ENCODE measurements at regions of chr1 and their contacts with region 1.

Region 1: GRCh38 chr1:42846257-42847110 is at the start of gene ZNF691:
- DNase-seq: peak; percentile 97
- ATAC-seq: peak; percentile 98
- H3K4me3 ChIP-seq: peak within 1 kb of the TSS; percentile 85 to 97 (median 95)
- H3K27ac ChIP-seq: peak within 1 kb of the TSS; percentile 85
- H3K4me1 ChIP-seq: peaks cover 24% of the 10 kb centered on the region
- H3K27me3 ChIP-seq: no peaks in the 10 kb centered on the region; a peak in 1 of 5 replicates
- CTCF ChIP-seq: peak; percentile 78
- EP300 ChIP-seq: no peak
- POLR2A ChIP-seq: peak; percentile 80 to 85
- RAD21 ChIP-seq: peak; percentile 33; the same call in 1 of the 2 replicates
- total RNA-seq, gene ZNF691: 7.8 and 8.2 TPM in 2 replicates

Region 2: GRCh38 chr1:42567043-42567442 is 279.4 kb before region 1 on chr1:
- CTCF ChIA-PET with region 1: no interaction called
- POLR2A ChIA-PET with region 1: no interaction called
- in situ Hi-C with region 1: no loop called
- intact Hi-C with region 1: no loop called
- DNase-seq: no peak
- ATAC-seq: no peak
- H3K4me3 ChIP-seq: no peak overlapping the region
- H3K27ac ChIP-seq: no peak overlapping the region
- H3K4me1 ChIP-seq: no peaks in the 10 kb centered on the region
- H3K27me3 ChIP-seq: no peaks in the 10 kb centered on the region
- CTCF ChIP-seq: no peak
- EP300 ChIP-seq: no peak
- POLR2A ChIP-seq: no peak
- RAD21 ChIP-seq: no peak

Region 3: DNA sequence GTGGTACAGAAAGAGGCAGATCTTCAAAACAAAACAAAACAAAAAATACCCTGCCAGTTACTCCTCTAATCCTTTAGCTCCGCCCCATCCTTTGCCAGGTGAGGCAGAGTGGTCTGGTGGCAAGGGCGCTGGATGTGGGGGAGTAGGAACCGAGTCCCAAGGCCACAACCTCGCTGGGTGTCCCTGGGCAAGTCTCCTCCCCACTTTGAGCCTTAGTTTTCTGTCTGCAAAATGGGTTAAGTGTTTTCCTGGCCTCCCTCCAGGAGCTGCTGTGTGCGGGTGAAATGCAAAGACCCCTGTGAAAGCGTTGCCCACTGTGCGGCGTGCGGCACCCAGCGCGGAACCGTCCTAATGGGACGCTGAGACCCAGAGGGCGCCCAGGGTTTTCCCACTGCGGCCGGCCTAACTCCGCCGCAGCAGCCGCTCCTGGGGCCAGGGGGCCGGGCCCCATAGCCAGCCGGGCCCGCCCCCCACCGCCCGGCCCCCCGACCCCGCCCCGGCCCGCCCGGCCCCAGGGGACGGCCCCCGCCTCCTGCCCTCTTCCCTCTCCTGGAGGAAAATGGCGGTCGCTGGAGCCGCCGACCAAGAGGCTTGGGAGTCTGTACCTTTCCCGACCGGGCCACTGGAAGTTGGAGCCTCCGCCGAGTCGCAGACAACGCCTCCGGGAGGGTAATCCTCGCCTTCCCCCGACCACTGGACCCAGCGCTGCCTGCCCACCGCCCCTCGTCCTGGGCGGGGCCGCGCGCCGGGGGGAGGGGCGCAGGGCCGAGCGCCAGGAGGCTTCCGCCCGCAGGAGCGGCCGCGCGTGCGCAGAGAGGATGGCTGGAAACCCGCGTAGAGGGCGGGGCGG is 29.7 kb before region 1 on chr1 and contains the starts of genes ERMAP and SVBP:
- CTCF ChIA-PET with region 1: no interaction called
- POLR2A ChIA-PET with region 1: interaction called, 37 read pairs
- in situ Hi-C with region 1: no loop called
- intact Hi-C with region 1: loop called (anchors 2 kb)
- DNase-seq: peak; percentile 73
- ATAC-seq: peak; percentile 94
- H3K4me3 ChIP-seq: peak within 1 kb of the TSS; percentile 73 to 87 (median 84)
- H3K27ac ChIP-seq: peak within 1 kb of the TSS; percentile 100
- H3K4me1 ChIP-seq: peaks cover 34% of the 10 kb centered on the region
- H3K27me3 ChIP-seq: no peaks in the 10 kb centered on the region; a peak in 1 of 5 replicates
- CTCF ChIP-seq: peak; percentile 43
- EP300 ChIP-seq: no peak
- POLR2A ChIP-seq: peak; percentile 74 to 86
- RAD21 ChIP-seq: peak; percentile 38; the same call in 1 of the 2 replicates
- total RNA-seq, gene ERMAP: 2.6 and 4.4 TPM in 2 replicates
- total RNA-seq, gene SVBP: 45.2 and 48.2 TPM in 2 replicates

Region 4: GRCh38 chr1:42825036-42825851 is 21.2 kb before region 1 on chr1:
- CTCF ChIA-PET with region 1: no interaction called
- POLR2A ChIA-PET with region 1: interaction called, 11 read pairs
- in situ Hi-C with region 1: no loop called
- intact Hi-C with region 1: no loop called
- DNase-seq: no peak
- ATAC-seq: no peak
- H3K4me3 ChIP-seq: no peak overlapping the region
- H3K27ac ChIP-seq: no peak overlapping the region
- H3K4me1 ChIP-seq: peaks cover 28% of the 10 kb centered on the region
- H3K27me3 ChIP-seq: no peaks in the 10 kb centered on the region
- CTCF ChIP-seq: no peak
- EP300 ChIP-seq: no peak
- POLR2A ChIP-seq: no peak
- RAD21 ChIP-seq: no peak

Region 5: DNA sequence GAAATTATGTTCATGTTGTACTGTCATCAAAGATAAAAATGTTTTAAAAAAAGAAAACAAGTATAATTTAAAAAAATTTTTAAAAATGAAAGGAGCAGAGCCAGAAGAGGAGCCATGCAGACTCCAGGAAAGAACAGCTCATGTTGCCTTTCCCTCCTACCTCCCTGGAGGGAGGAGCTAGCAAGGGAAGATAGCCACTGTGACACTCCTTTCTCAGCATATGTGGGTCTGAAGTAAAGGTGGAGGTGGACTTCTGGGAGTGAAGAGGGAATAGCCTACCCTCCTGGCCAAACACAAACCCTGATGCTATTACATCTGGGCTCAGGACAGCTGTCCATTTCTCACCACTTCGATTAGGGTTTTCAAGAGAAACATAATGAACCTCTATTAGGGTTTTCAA is 58.0 kb after region 1 on chr1:
- CTCF ChIA-PET with region 1: no interaction called
- POLR2A ChIA-PET with region 1: no interaction called
- in situ Hi-C with region 1: loop called (anchors 5 kb)
- intact Hi-C with region 1: no loop called
- DNase-seq: no peak
- ATAC-seq: no peak
- H3K4me3 ChIP-seq: no peak overlapping the region
- H3K27ac ChIP-seq: no peak overlapping the region
- H3K4me1 ChIP-seq: no peaks in the 10 kb centered on the region
- H3K27me3 ChIP-seq: peaks cover 3 to 19% of the 10 kb centered on the region in 2 experiments; a peak in 3 of 5 replicates
- CTCF ChIP-seq: no peak
- EP300 ChIP-seq: no peak
- POLR2A ChIP-seq: no peak
- RAD21 ChIP-seq: no peak

Region 6: GRCh38 chr1:43648221-43648847 is 801.9 kb after region 1 on chr1:
- CTCF ChIA-PET with region 1: no interaction called
- POLR2A ChIA-PET with region 1: no interaction called
- in situ Hi-C with region 1: no loop called
- intact Hi-C with region 1: no loop called
- DNase-seq: no peak
- ATAC-seq: no peak
- H3K4me3 ChIP-seq: peak overlapping the region in 2 of 3 experiments; percentile 78 to 88; a peak in 2 of 6 replicates
- H3K27ac ChIP-seq: peak overlapping the region; percentile 43
- H3K4me1 ChIP-seq: peaks cover 43% of the 10 kb centered on the region
- H3K27me3 ChIP-seq: peaks cover 0 to 10% of the 10 kb centered on the region in 2 experiments; a peak in 2 of 5 replicates
- CTCF ChIP-seq: no peak
- EP300 ChIP-seq: no peak
- POLR2A ChIP-seq: no peak
- RAD21 ChIP-seq: no peak

Measured in HepG2 (cell line).